ENCODE measurements at regions of chr6 and their contacts with region 1.

Region 1: GRCh38 chr6:55825402-55826051 is 49.9 kb downstream of the BMP5 start:
- DNase-seq: peak; percentile 55
- ATAC-seq: peak; percentile 92
- H3K4me3 ChIP-seq: no peak overlapping the region
- H3K27ac ChIP-seq: peak overlapping the region; percentile 90
- H3K4me1 ChIP-seq: peaks cover 73% of the 10 kb centered on the region
- H3K27me3 ChIP-seq: no peaks in the 10 kb centered on the region
- CTCF ChIP-seq: no peak

Region 2: GRCh38 chr6:55388211-55388610 is 437.3 kb before region 1 on chr6:
- CTCF ChIA-PET with region 1: no interaction called
- POLR2A ChIA-PET with region 1: no interaction called
- in situ Hi-C with region 1: no loop called
- intact Hi-C with region 1: no loop called
- DNase-seq: no peak
- ATAC-seq: no peak
- H3K4me3 ChIP-seq: no peak overlapping the region
- H3K27ac ChIP-seq: no peak overlapping the region
- H3K4me1 ChIP-seq: no peaks in the 10 kb centered on the region
- H3K27me3 ChIP-seq: 0 out of 2 replicates have a peak, but pooled peaks cover 2% of the 10 kb centered on the region
- CTCF ChIP-seq: no peak

Region 3: GRCh38 chr6:55868771-55869479 is 43.4 kb after region 1 on chr6:
- CTCF ChIA-PET with region 1: no interaction called
- POLR2A ChIA-PET with region 1: no interaction called
- in situ Hi-C with region 1: no loop called
- intact Hi-C with region 1: loop called (anchors 5 kb)
- DNase-seq: peak; percentile 69
- ATAC-seq: peak; percentile 95
- H3K4me3 ChIP-seq: peak overlapping the region; percentile 30 to 51; a peak in 3 of 4 replicates
- H3K27ac ChIP-seq: peak overlapping the region; percentile 99
- H3K4me1 ChIP-seq: peaks cover 50% of the 10 kb centered on the region
- H3K27me3 ChIP-seq: no peaks in the 10 kb centered on the region
- CTCF ChIP-seq: no peak

Region 4: GRCh38 chr6:55941702-55942101 is 116.2 kb after region 1 on chr6:
- CTCF ChIA-PET with region 1: no interaction called
- POLR2A ChIA-PET with region 1: no interaction called
- in situ Hi-C with region 1: no loop called
- intact Hi-C with region 1: loop called (anchors 10 kb)
- DNase-seq: no peak
- ATAC-seq: peak; percentile 58; the same call in 1 of the 2 replicates
- H3K4me3 ChIP-seq: no peak overlapping the region
- H3K27ac ChIP-seq: peak overlapping the region; percentile 52; the same call in 1 of the 2 replicates
- H3K4me1 ChIP-seq: no peaks in the 10 kb centered on the region
- H3K27me3 ChIP-seq: no peaks in the 10 kb centered on the region
- CTCF ChIP-seq: peak; percentile 34; the same call in 1 of the 2 replicates

Region 5: DNA sequence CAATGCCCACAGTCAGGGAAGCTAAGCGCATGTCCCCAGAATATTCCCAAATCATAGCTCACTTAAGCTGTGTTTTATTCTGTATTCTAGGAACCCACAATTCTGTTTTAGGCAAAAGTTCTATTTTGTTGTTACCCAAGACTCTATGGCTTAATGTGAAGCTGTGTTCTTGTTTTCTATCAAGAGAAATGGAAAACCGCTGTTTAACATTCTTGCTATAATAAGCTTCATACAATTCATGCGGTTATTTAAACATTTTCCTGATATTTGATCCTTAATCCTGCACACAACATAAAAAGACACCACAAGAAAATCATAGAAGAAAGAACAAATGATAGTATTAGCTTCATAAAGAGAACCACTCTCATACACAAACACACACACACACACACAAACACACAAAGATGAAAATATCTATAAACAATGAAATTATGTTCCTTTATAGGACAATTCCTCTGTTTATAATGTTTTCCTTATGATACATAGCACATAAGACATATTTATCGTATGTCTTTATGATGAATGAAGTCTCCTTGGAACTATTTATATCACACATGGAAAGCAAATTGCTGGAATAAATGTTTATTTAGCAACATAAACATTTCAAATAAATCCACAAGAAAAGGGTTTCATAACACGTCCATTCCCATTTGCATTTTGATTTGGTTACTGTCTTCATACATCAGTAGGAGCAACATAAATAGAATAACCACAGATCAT is 438.2 kb after region 1 on chr6:
- CTCF ChIA-PET with region 1: no interaction called
- POLR2A ChIA-PET with region 1: no interaction called
- in situ Hi-C with region 1: no loop called
- intact Hi-C with region 1: no loop called
- DNase-seq: no peak
- ATAC-seq: no peak
- H3K4me3 ChIP-seq: no peak overlapping the region
- H3K27ac ChIP-seq: no peak overlapping the region
- H3K4me1 ChIP-seq: no peaks in the 10 kb centered on the region
- H3K27me3 ChIP-seq: no peaks in the 10 kb centered on the region; the same call in 1 of the 2 replicates
- CTCF ChIP-seq: no peak